ENCODE measurements at regions of chr3 and their contacts with region 1.

Region 1: GRCh38 chr3:179147873-179148615 is at the start of gene PIK3CA:
- DNase-seq: peak; percentile 90
- H3K4me3 Mint-ChIP-seq: peak within 1 kb of the TSS; percentile 93
- H3K27ac Mint-ChIP-seq: peak within 1 kb of the TSS; percentile 97
- H3K4me1 Mint-ChIP-seq: peaks cover 38% of the 10 kb centered on the region
- H3K27me3 Mint-ChIP-seq: peaks cover 23% of the 10 kb centered on the region
- total RNA-seq, gene PIK3CA: 18.9 and 19.7 TPM in 2 replicates

Region 2: DNA sequence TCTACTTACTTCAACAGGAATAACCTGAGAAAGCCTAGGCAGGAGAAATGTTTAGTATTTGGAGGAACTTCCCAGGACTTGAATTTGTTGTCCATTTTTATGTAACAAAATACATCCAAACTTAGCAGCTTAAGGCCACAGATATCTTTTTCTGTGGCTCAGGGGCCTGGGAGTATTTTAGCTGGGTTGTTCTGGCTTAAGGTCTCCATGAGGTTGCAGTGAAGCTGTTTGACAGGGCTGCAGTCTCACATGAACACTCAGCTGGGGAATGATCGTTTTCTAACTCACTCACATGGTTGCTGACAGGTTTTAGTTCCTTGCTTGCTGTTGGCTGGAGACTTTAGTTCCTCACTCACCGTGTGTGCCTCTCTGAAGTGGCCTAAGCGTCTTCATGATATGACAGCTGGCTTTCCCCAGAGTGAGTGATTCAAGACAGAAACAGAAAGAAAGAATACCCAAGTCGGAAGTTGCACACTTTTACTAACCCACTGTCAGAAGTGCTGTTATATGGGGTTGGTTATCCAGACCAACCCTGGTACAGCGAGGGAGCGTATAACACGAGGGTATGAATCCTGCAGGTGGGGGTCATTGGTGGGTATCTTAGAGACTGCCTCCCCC is 1721.1 kb before region 1 on chr3:
- intact Hi-C with region 1: loop called (anchors 5 kb)
- DNase-seq: peak; percentile 65
- H3K4me3 Mint-ChIP-seq: peak overlapping the region; percentile 20
- H3K27ac Mint-ChIP-seq: peak overlapping the region; percentile 59
- H3K4me1 Mint-ChIP-seq: peaks cover 29% of the 10 kb centered on the region
- H3K27me3 Mint-ChIP-seq: peaks cover 16% of the 10 kb centered on the region

Region 3: DNA sequence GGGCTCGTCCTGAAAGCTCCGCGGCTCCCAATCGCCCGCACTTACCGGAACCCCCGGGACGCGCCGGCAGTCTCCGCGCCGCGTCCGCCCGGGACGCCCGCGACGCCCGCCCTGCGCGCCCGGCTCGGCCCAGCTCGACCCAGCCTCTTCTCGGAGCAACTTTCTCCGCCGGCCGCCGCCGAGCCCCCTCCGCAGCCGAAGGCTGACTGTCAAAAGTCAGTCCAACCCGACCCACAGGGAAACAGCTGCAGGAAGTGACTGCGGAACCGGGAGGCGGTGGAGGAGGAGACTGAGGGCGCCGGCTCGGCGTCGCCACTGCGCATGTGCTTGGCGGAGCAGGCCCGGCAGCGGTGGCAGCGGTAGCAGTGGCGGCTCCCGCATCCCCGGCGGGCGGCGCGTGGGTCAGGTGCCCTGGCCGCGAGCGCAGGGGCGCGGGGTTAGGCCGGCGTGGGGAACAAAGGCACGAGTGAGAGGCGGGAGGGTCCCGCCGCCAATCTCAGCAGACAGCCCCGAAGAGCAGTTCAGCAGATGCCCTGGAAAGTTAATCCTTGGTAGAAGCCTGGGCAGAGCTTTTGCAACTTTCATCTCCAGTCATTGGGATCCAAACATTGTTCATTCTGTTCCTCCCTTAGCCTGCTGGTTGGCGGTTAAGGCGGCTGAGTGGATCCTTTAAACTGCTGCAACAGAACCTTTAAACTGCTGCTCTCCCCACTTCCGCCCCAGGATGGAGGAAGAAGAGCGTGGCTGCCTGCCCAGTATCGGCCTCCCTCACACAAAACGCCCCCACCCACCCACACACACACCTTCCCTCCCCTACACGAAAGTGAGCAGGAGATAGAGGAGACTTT is 76.3 kb before region 1 on chr3 and contains the start of gene ZMAT3:
- intact Hi-C with region 1: loop called (anchors 1 kb)
- DNase-seq: peak; percentile 84
- H3K4me3 Mint-ChIP-seq: peak within 1 kb of the TSS; percentile 98
- H3K27ac Mint-ChIP-seq: peak within 1 kb of the TSS; percentile 95
- H3K4me1 Mint-ChIP-seq: peaks cover 43% of the 10 kb centered on the region
- H3K27me3 Mint-ChIP-seq: peaks cover 3% of the 10 kb centered on the region
- total RNA-seq, gene ZMAT3: 16.9 and 17.3 TPM in 2 replicates

Region 4: DNA sequence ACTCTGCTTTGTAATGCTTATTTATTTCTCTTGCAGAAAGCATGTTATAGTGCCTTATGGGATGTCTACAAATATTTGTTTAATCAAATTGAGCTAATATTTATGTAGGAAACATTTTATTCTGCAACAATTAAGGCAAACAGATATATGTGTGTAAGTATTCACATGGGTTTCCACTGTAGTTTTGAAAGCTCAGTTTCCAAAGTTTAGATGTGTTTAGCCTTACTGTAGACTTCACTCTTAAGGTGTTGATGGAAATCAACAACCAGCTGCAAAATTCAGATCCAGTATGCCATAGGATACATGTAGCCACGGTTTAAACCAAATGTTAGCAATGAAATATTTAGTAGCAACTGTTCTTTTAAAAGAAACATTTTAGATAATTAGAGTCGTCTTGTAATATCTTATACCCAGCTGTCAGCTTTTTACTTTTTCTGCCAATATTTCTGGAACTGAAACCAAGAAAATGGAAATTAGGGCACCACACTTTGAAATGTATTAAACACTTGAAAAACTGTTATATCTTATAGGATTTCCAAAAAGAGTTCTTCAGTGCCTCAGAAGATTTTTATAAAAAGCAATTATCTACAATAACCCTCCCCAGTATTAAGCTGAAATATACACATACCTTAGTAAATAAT is 18.6 kb after region 1 on chr3:
- intact Hi-C with region 1: no loop called
- DNase-seq: no peak
- H3K4me3 Mint-ChIP-seq: no peak overlapping the region
- H3K27ac Mint-ChIP-seq: no peak overlapping the region
- H3K4me1 Mint-ChIP-seq: peaks cover 7% of the 10 kb centered on the region
- H3K27me3 Mint-ChIP-seq: peaks cover 4% of the 10 kb centered on the region

Region 5: DNA sequence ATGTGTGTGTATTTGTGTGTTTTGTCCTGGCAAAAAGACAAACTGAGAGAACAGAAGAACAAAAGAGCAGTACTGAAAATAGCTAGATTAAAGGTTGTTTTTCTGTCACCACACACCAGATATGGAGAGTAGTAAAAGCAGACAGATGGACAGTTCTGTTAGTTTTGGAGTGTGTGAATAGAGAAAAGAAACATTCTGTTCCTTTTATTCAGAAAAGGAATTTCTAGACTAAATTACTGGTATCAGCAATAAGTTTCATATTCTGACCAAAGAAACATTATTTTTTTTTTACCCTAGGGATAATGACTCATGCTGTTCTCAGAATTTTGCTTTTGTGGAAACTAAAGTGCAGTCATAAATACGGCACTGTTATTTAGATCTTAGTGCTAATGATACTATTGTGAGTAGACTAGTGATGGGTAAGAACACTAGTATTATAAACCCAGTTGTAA is 33.0 kb after region 1 on chr3:
- intact Hi-C with region 1: loop called (anchors 1 kb)
- DNase-seq: no peak
- H3K4me3 Mint-ChIP-seq: no peak overlapping the region
- H3K27ac Mint-ChIP-seq: peak overlapping the region; percentile 46
- H3K4me1 Mint-ChIP-seq: no peaks in the 10 kb centered on the region
- H3K27me3 Mint-ChIP-seq: peaks cover 2% of the 10 kb centered on the region

Region 6: DNA sequence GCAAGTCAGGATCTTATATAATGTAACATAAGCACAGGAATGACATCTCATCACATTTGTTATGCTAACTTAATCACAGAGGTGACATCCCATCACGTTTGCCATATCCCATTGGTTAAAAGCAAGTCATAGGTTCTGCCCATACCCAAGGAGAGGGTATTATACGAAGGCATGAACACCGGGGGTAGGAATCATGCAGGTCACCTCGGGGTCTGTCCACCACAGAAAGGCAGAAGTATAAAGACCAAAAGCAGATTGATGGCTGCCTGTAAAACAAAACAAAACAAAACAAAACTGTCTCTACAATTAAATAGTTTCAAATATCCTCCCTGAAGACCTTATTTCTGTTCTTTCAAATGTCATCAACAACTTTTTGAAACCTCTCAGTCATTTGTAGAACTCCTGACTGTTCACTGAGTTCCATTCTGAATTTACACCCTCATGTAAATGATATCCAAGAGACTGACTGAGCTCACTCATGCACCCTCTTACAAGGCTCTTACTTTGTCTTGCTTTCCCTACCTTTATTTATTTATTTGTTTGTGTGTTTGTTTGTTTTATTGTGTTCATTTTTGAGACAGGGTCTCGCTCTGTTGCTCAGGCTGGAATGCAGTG is 152.1 kb after region 1 on chr3:
- intact Hi-C with region 1: no loop called
- DNase-seq: no peak
- H3K4me3 Mint-ChIP-seq: no peak overlapping the region
- H3K27ac Mint-ChIP-seq: no peak overlapping the region
- H3K4me1 Mint-ChIP-seq: no peaks in the 10 kb centered on the region
- H3K27me3 Mint-ChIP-seq: peaks cover 11% of the 10 kb centered on the region

Region 7: GRCh38 chr3:179322286-179323196 is 174.5 kb after region 1 on chr3 and contains the start of gene ZNF639:
- intact Hi-C with region 1: loop called (anchors 1 kb)
- DNase-seq: peak; percentile 78
- H3K4me3 Mint-ChIP-seq: peak within 1 kb of the TSS; percentile 90
- H3K27ac Mint-ChIP-seq: peak within 1 kb of the TSS; percentile 92
- H3K4me1 Mint-ChIP-seq: peaks cover 32% of the 10 kb centered on the region
- H3K27me3 Mint-ChIP-seq: peaks cover 16% of the 10 kb centered on the region
- total RNA-seq, gene ZNF639: 36.2 and 37.0 TPM in 2 replicates

Region 8: DNA sequence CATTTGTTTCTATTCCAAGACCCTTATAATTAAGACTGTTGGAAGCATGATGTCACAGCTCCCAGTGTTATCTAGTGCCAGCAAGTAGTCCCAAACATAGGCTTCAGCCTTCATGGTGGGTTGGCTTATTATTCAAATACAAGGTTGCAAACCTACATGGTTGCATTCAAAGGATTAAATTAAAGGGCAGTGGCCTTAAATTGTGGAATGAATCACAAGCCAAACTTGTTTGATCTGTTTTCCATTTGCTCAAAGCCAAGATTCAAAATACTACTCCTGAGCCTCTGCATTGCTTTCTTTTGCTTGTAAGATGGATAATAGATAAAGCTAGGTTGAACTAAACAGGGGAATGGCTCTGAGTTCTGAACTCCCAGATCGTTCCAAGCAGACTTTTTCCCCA is 355.6 kb after region 1 on chr3:
- intact Hi-C with region 1: no loop called
- DNase-seq: no peak
- H3K4me3 Mint-ChIP-seq: no peak overlapping the region
- H3K27ac Mint-ChIP-seq: no peak overlapping the region
- H3K4me1 Mint-ChIP-seq: no peaks in the 10 kb centered on the region
- H3K27me3 Mint-ChIP-seq: peaks cover 12% of the 10 kb centered on the region

Region 9: GRCh38 chr3:179604321-179605078 is 456.5 kb after region 1 on chr3 and contains the starts of genes MRPL47 and NDUFB5:
- intact Hi-C with region 1: loop called (anchors 1 kb)
- DNase-seq: peak; percentile 91
- H3K4me3 Mint-ChIP-seq: peak within 1 kb of the TSS; percentile 97
- H3K27ac Mint-ChIP-seq: peak within 1 kb of the TSS; percentile 99
- H3K4me1 Mint-ChIP-seq: peaks cover 36% of the 10 kb centered on the region
- H3K27me3 Mint-ChIP-seq: no peaks in the 10 kb centered on the region
- total RNA-seq, gene MRPL47: 65.1 and 65.5 TPM in 2 replicates
- total RNA-seq, gene NDUFB5: 81.5 and 86.1 TPM in 2 replicates